Activated CD8-positive, alpha-beta T cell treated with anti-CD3 and anti-CD28 coated beads for 36 hours (primary cell): ENCODE measurements at regions of chr10 and their contacts with region 1.

Region 1: GRCh38 chr10:100508691-100509150 is 10.9 kb downstream of the SEC31B start:
- DNase-seq: peak; percentile 65
- ATAC-seq: peak; percentile 48
- H3K4me3 Mint-ChIP-seq: peak overlapping the region; percentile 59
- H3K27ac Mint-ChIP-seq: peak overlapping the region; percentile 95
- H3K4me1 Mint-ChIP-seq: peaks cover 72% of the 10 kb centered on the region
- H3K27me3 Mint-ChIP-seq: no peaks in the 10 kb centered on the region
- CTCF ChIP-seq: peak; percentile 91

Region 2: GRCh38 chr10:100338434-100339036 is 170.2 kb before region 1 on chr10:
- CTCF ChIA-PET with region 1: interaction called, 82 read pairs
- POLR2A ChIA-PET with region 1: interaction called, 8 read pairs
- intact Hi-C with region 1: loop called (anchors 5 kb)
- DNase-seq: peak; percentile 90
- ATAC-seq: peak; percentile 92
- H3K4me3 Mint-ChIP-seq: no peak overlapping the region
- H3K27ac Mint-ChIP-seq: peak overlapping the region; percentile 44
- H3K4me1 Mint-ChIP-seq: peaks cover 2% of the 10 kb centered on the region
- H3K27me3 Mint-ChIP-seq: peaks cover 1% of the 10 kb centered on the region
- CTCF ChIP-seq: peak; percentile 91

Region 3: DNA sequence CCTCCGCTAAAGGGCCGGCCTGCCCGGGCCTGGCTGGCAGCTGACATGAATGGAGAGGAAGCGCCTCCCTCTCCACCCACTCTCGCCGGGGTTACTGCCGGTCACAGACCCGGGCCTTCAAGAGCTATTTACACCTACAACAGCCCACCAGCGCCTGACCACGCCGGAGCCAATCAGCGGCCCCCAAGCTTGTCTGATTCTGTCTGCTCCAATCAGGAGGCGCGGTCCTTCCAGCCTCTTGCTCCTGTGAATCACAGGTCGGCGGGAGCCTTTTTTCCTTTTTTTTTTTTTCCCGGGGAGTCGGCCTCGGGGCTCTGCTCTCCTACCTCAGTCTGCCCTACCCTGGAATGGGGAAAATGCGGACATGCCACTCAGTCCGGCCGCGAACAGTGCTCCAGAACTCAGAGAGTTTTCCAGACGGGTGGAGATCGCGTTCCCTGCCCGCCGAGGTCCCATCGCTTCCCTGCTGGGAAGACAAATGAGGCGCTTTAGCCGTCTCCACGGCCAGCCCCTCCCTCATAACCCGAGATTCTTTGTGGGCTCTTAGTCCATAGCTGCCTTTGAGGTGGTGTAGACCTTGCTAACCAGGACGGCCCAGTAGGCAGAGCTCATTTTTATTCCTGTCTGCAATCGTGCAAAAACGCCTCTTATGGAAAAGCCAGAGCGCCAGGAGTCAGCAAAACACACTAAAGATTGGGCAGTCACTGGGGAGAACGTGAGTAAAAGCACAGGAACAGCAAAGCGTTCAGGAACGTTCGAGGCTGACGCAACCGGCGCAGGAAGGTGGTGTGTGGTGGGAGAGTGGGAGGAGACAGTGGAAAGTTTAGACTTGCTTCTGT is 135.2 kb before region 1 on chr10:
- CTCF ChIA-PET with region 1: interaction called, 7 read pairs
- POLR2A ChIA-PET with region 1: interaction called, 10 read pairs
- intact Hi-C with region 1: no loop called
- DNase-seq: peak; percentile 100
- ATAC-seq: peak; percentile 83
- H3K4me3 Mint-ChIP-seq: no peak overlapping the region
- H3K27ac Mint-ChIP-seq: no peak overlapping the region
- H3K4me1 Mint-ChIP-seq: peaks cover 39% of the 10 kb centered on the region
- H3K27me3 Mint-ChIP-seq: no peaks in the 10 kb centered on the region
- CTCF ChIP-seq: no peak

Region 4: DNA sequence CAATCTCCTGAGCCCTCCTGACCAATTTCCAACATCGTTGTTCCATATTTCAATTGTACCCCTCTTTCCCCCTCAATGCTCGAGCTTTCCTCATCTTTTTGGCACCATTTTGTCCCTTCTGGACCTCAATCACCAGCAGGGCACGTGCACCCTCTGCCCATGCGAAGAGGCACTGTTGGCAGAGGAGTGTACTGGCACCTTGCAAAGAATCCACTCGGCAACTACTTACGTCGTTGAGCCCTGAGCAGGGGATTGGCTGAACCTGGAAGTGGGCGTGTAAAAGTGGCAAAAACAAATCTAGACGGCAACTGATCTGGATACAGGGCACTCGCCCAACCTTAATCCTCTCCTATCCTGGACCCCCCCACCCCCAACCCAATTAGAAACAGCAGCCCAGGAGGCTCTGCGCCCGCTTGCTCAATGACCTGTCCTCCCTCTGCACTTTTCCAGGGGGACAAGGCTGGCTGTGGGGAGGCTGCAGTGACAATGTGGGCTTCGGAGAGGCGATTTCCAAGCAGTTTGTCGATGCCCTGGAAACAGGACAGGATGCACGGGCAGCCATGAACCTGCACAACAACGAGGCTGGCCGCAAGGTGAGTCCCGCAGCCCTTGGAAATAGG is 27.1 kb before region 1 on chr10:
- CTCF ChIA-PET with region 1: interaction called, 185 read pairs
- POLR2A ChIA-PET with region 1: interaction called, 50 read pairs
- intact Hi-C with region 1: loop called (anchors 2 kb)
- DNase-seq: peak; percentile 96
- ATAC-seq: peak; percentile 98
- H3K4me3 Mint-ChIP-seq: peak overlapping the region; percentile 77
- H3K27ac Mint-ChIP-seq: no peak overlapping the region
- H3K4me1 Mint-ChIP-seq: peaks cover 10% of the 10 kb centered on the region
- H3K27me3 Mint-ChIP-seq: peaks cover 18% of the 10 kb centered on the region
- CTCF ChIP-seq: no peak

Region 5: GRCh38 chr10:100529475-100530298 is 21.0 kb after region 1 on chr10 and contains the start of gene NDUFB8:
- CTCF ChIA-PET with region 1: interaction called, 39 read pairs
- POLR2A ChIA-PET with region 1: interaction called, 11 read pairs
- intact Hi-C with region 1: no loop called
- DNase-seq: peak; percentile 92
- ATAC-seq: peak; percentile 72
- H3K4me3 Mint-ChIP-seq: peak within 1 kb of the TSS; percentile 85
- H3K27ac Mint-ChIP-seq: peak within 1 kb of the TSS; percentile 95
- H3K4me1 Mint-ChIP-seq: peaks cover 32% of the 10 kb centered on the region
- H3K27me3 Mint-ChIP-seq: no peaks in the 10 kb centered on the region
- CTCF ChIP-seq: no peak
- total RNA-seq, gene NDUFB8: 365 to 384 TPM

Region 6: DNA sequence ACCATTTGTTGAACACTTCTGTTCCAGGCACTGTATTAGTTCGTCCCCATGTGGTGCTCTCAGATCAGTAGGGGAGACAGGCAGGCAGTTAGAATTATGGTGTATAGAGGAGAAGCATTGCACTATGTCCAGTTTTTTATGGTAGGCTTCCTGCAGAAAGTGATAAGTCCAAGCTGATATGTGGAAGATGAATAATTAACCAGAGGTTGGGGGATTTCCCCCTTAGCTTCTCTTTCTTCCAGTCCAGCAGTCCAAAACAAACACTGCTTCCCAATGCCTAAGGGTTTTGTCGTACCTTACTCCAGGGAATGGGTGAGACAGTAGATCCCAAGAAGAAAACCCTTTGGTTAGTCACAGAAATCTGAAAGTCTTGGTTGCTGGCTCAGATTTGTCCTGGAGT is 46.2 kb after region 1 on chr10:
- CTCF ChIA-PET with region 1: no interaction called
- POLR2A ChIA-PET with region 1: no interaction called
- intact Hi-C with region 1: no loop called
- DNase-seq: no peak
- ATAC-seq: no peak
- H3K4me3 Mint-ChIP-seq: no peak overlapping the region
- H3K27ac Mint-ChIP-seq: no peak overlapping the region
- H3K4me1 Mint-ChIP-seq: no peaks in the 10 kb centered on the region
- H3K27me3 Mint-ChIP-seq: no peaks in the 10 kb centered on the region
- CTCF ChIP-seq: no peak